ENCODE measurements at regions of chr11 and their contacts with region 1.

Region 1: DNA sequence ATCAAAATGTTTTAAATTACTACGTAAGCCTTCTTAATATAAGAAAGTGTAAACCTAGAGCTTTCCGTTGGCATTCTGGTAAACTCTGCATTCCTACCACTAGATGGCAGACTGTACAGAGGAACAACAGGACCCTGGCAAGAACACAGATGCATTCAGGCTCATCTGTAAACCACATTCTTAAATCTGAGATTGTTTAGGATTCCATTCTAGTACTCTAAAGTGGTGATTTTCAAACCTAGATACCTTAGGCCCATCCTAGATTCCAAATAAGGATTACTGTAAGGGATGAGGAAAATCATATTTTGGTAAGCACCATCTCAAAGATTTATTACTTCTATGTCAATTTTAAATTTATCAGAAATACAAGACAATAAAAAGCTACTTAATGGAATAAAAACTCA is 26.9 kb downstream of the PICALM start:
- DNase-seq: peak in 9 of 14 experiments; percentile 11 to 88 (median 34)
- ATAC-seq: peak; percentile 98
- H3K4me3 ChIP-seq: no peak overlapping the region
- H3K4me3 Mint-ChIP-seq: no peak overlapping the region
- H3K27ac ChIP-seq: no peak overlapping the region
- H3K27ac Mint-ChIP-seq: peak overlapping the region; percentile 27
- H3K4me1 ChIP-seq: peaks cover 16% of the 10 kb centered on the region
- H3K4me1 Mint-ChIP-seq: peaks cover 62% of the 10 kb centered on the region
- H3K27me3 ChIP-seq: no peaks in the 10 kb centered on the region
- H3K27me3 Mint-ChIP-seq: no peaks in the 10 kb centered on the region
- CTCF ChIP-seq: peak; percentile 93

Region 2: GRCh38 chr11:86021377-86021776 is 20.6 kb before region 1 on chr11:
- CTCF ChIA-PET with region 1: interaction called, 10 read pairs
- POLR2A ChIA-PET with region 1: no interaction called
- intact Hi-C with region 1: no loop called
- DNase-seq: peak in 3 of 14 experiments; percentile 13 to 26 (median 20)
- ATAC-seq: no peak
- H3K4me3 ChIP-seq: no peak overlapping the region
- H3K4me3 Mint-ChIP-seq: no peak overlapping the region
- H3K27ac ChIP-seq: no peak overlapping the region
- H3K27ac Mint-ChIP-seq: no peak overlapping the region
- H3K4me1 ChIP-seq: no peaks in the 10 kb centered on the region
- H3K4me1 Mint-ChIP-seq: peaks cover 37% of the 10 kb centered on the region
- H3K27me3 ChIP-seq: no peaks in the 10 kb centered on the region
- H3K27me3 Mint-ChIP-seq: no peaks in the 10 kb centered on the region
- CTCF ChIP-seq: no peak

Region 3: GRCh38 chr11:86138958-86139357 is 97.0 kb after region 1 on chr11:
- CTCF ChIA-PET with region 1: interaction called, 3 read pairs
- POLR2A ChIA-PET with region 1: no interaction called
- intact Hi-C with region 1: loop called in 1 of 2 experiments (anchors 10 kb)
- DNase-seq: peak in 4 of 14 experiments; percentile 16 to 74 (median 48)
- ATAC-seq: no peak
- H3K4me3 ChIP-seq: no peak overlapping the region
- H3K4me3 Mint-ChIP-seq: peak overlapping the region; percentile 65
- H3K27ac ChIP-seq: peak overlapping the region in 1 of 2 donors; percentile 66
- H3K27ac Mint-ChIP-seq: peak overlapping the region; percentile 86
- H3K4me1 ChIP-seq: peaks cover 14% of the 10 kb centered on the region
- H3K4me1 Mint-ChIP-seq: peaks cover 36% of the 10 kb centered on the region
- H3K27me3 ChIP-seq: no peaks in the 10 kb centered on the region
- H3K27me3 Mint-ChIP-seq: no peaks in the 10 kb centered on the region
- CTCF ChIP-seq: no peak

Region 4: DNA sequence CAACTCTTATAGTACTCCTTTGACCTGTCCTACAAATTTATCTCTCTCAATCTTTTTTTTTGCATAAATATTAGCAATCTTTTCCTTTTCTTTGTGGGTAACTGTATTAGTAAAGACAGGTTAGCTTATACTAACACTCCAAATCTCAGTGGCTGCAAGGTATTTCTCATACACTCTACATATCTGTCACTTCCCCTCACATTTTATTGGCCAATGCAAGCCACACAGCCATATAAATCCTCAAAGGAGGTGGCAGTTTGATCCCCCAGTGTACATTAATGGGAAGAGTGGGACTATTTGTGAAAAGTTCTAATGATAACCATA is 160.0 kb after region 1 on chr11:
- CTCF ChIA-PET with region 1: interaction called, 57 read pairs
- POLR2A ChIA-PET with region 1: interaction called, 5 read pairs
- intact Hi-C with region 1: no loop called
- DNase-seq: peak in 4 of 14 experiments; percentile 6 to 43 (median 30)
- ATAC-seq: peak; percentile 71
- H3K4me3 ChIP-seq: peak overlapping the region; percentile 57
- H3K4me3 Mint-ChIP-seq: no peak overlapping the region
- H3K27ac ChIP-seq: no peak overlapping the region
- H3K27ac Mint-ChIP-seq: no peak overlapping the region
- H3K4me1 ChIP-seq: peaks cover 7% of the 10 kb centered on the region
- H3K4me1 Mint-ChIP-seq: no peaks in the 10 kb centered on the region
- H3K27me3 ChIP-seq: no peaks in the 10 kb centered on the region
- H3K27me3 Mint-ChIP-seq: no peaks in the 10 kb centered on the region
- CTCF ChIP-seq: no peak

Region 5: DNA sequence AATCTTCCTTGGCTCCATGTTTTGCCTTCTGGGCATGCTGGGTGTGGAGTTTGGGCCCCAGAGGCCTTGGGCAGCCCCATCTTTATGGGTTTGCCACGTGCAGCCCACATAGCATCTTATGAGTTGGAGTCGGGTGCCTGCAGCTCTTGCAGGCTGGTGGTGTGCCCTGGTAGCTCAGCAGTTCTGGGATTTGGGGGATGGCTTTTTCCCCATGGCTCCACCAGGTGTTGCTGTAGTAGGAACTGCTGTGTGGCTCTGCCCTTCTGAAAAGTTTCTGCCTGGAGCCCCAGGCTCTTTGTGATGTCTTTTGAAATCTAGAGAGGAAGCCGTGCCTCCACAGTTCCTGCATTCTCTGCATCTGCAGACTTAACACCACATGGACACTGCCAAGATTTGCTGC is 219.4 kb after region 1 on chr11:
- CTCF ChIA-PET with region 1: interaction called, 11 read pairs
- POLR2A ChIA-PET with region 1: no interaction called
- intact Hi-C with region 1: no loop called
- DNase-seq: no peak
- ATAC-seq: no peak
- H3K4me3 ChIP-seq: no peak overlapping the region
- H3K4me3 Mint-ChIP-seq: no peak overlapping the region
- H3K27ac ChIP-seq: no peak overlapping the region
- H3K27ac Mint-ChIP-seq: no peak overlapping the region
- H3K4me1 ChIP-seq: no peaks in the 10 kb centered on the region
- H3K4me1 Mint-ChIP-seq: peaks cover 10% of the 10 kb centered on the region
- H3K27me3 ChIP-seq: no peaks in the 10 kb centered on the region
- H3K27me3 Mint-ChIP-seq: no peaks in the 10 kb centered on the region
- CTCF ChIP-seq: no peak